ENCODE measurements at regions of chr1 and their contacts with region 1.

Region 1: GRCh38 chr1:167066333-167067122 is 23.6 kb downstream of the GPA33 start:
- DNase-seq: peak; percentile 64
- H3K4me3 ChIP-seq: no peak overlapping the region
- H3K27ac ChIP-seq: no peak overlapping the region
- H3K4me1 ChIP-seq: no peaks in the 10 kb centered on the region
- H3K27me3 ChIP-seq: no peaks in the 10 kb centered on the region
- CTCF ChIP-seq: peak; percentile 75 to 96 (median 94)
- POLR2A ChIP-seq: no peak

Region 2: DNA sequence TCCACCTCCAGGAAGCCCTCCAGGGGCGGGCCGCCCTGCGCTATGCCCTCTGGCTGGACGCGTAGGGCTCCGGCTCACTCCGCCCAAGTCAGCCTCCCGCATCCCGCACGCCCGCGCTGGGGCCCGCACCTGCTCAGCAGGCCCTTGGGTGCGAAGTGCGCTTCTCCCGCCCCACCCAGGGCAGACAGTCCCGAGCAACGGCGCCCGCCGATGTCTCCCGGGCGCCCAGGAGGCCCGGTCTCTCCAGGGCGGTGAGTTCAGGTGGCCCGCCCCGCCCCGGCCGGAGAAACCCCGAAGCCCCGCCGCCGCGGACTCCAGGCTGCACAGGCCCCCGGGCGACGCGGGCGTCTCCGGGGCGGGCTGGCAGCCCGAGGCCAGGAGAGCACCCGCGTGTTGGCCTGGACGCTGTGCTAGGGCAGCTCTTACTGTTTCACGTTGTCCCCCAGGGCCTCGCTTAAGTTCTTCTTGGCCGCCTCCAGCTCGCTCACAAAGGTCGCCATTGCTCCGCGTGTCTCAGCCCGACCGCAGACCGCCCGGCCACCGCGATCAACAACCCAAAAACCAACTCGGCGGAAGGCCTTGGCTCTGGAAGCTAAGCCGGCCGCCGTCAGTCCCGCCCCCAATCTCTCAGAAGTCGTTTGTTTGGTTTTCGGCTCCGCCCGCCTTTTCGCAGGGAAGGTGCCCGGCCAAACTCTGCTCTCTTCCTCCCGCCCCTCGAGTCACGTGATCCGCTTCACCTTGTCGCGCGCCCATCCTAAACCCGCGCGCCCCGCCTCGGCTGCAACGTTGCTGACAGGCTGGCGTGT is 190.6 kb before region 1 on chr1 and contains the start of gene TADA1:
- intact Hi-C with region 1: no loop called
- DNase-seq: peak; percentile 99
- H3K4me3 ChIP-seq: peak within 1 kb of the TSS; percentile 59 to 87
- H3K27ac ChIP-seq: peak within 1 kb of the TSS; percentile 86 to 95
- H3K4me1 ChIP-seq: no peaks in the 10 kb centered on the region
- H3K27me3 ChIP-seq: no peaks in the 10 kb centered on the region
- CTCF ChIP-seq: peak in 3 of 4 experiments; percentile 42 to 59 (median 47)
- POLR2A ChIP-seq: peak; percentile 68
- total RNA-seq, gene TADA1: 14.2 to 19.5 TPM

Region 3: GRCh38 chr1:167220537-167221125 is 154.1 kb after region 1 on chr1 and contains the start of gene POU2F1:
- intact Hi-C with region 1: loop called (anchors 2 kb)
- DNase-seq: peak; percentile 97
- H3K4me3 ChIP-seq: peak within 1 kb of the TSS; percentile 86 to 91
- H3K27ac ChIP-seq: peak within 1 kb of the TSS; percentile 96 to 98
- H3K4me1 ChIP-seq: peaks cover 2% of the 10 kb centered on the region
- H3K27me3 ChIP-seq: no peaks in the 10 kb centered on the region
- CTCF ChIP-seq: peak; percentile 53 to 95 (median 92)
- POLR2A ChIP-seq: peak; percentile 77
- total RNA-seq, gene POU2F1: 10.9 to 26.6 TPM

Region 4: GRCh38 chr1:167442124-167442848 is 375.8 kb after region 1 on chr1:
- intact Hi-C with region 1: loop called (anchors 2 kb)
- DNase-seq: peak; percentile 83
- H3K4me3 ChIP-seq: no peak overlapping the region
- H3K27ac ChIP-seq: no peak overlapping the region
- H3K4me1 ChIP-seq: no peaks in the 10 kb centered on the region
- H3K27me3 ChIP-seq: peaks cover 2% of the 10 kb centered on the region
- CTCF ChIP-seq: peak; percentile 58 to 90 (median 83)
- POLR2A ChIP-seq: no peak

Region 5: GRCh38 chr1:167533851-167534300 is 467.3 kb after region 1 on chr1:
- intact Hi-C with region 1: loop called (anchors 5 kb)
- DNase-seq: peak; percentile 54
- H3K4me3 ChIP-seq: no peak overlapping the region
- H3K27ac ChIP-seq: no peak overlapping the region
- H3K4me1 ChIP-seq: no peaks in the 10 kb centered on the region
- H3K27me3 ChIP-seq: no peaks in the 10 kb centered on the region
- CTCF ChIP-seq: peak; percentile 40 to 75 (median 70)
- POLR2A ChIP-seq: no peak

Region 6: GRCh38 chr1:167553136-167554027 is 486.9 kb after region 1 on chr1 and contains the start of gene CREG1:
- intact Hi-C with region 1: loop called (anchors 5 kb)
- DNase-seq: peak; percentile 96
- H3K4me3 ChIP-seq: peak within 1 kb of the TSS; percentile 83 to 86
- H3K27ac ChIP-seq: peak within 1 kb of the TSS; percentile 82 to 89
- H3K4me1 ChIP-seq: no peaks in the 10 kb centered on the region
- H3K27me3 ChIP-seq: no peaks in the 10 kb centered on the region
- CTCF ChIP-seq: peak in 2 of 4 experiments; percentile 36 to 38
- POLR2A ChIP-seq: peak; percentile 95
- total RNA-seq, gene CREG1: 132 to 204 TPM